ENCODE measurements at regions of chr10 and their contacts with region 1.

Region 1: DNA sequence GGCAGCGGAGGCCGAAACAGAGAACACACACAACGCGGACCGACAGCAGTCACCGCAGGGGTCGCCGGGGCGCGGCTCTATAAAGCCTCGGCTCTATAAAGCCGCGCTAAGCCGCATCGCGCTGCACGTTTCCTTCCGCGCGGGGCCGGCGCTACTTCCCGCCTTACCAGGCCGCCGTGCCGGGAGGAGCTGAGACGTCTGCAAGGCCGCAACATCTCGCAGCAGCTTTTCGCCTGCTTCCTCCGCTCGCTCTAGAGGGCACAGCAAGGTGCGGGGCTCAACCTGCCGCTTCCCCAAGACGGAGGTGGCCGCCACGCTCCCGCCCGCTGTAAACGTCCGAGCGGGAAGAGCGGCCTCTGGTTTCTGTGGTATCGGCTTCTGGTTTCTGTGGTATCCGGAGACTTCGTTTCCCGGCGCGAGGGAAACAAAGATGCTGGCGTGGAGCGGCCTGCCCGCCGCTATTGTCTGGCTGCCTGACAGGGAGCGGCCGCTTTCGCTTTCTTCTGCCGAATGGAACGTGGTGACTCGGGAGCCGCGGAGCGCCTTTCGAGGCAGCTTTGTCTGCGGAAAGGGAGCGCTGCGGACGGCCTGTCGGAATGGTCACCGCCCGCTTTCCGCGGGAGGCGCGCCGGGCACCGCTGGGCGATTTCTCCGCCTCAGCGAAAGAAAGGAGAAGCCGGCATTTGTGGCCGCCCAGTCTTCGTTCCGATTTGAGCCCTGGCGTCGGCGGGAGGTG is 91.8 kb downstream of the SPAG6 start:
- DNase-seq: peak; percentile 97
- H3K4me3 ChIP-seq: peak overlapping the region; percentile 67 to 86 (median 80)
- H3K27ac ChIP-seq: peak overlapping the region; percentile 93 to 98 (median 96)
- H3K4me1 ChIP-seq: peaks cover 18 to 27% (median 25%) of the 10 kb centered on the region in 4 donors
- H3K27me3 ChIP-seq: no peaks in the 10 kb centered on the region
- CTCF ChIP-seq: peak in 2 of 3 experiments; percentile 3 to 4
- EP300 ChIP-seq: no peak
- POLR2A ChIP-seq: peak; percentile 26

Region 2: DNA sequence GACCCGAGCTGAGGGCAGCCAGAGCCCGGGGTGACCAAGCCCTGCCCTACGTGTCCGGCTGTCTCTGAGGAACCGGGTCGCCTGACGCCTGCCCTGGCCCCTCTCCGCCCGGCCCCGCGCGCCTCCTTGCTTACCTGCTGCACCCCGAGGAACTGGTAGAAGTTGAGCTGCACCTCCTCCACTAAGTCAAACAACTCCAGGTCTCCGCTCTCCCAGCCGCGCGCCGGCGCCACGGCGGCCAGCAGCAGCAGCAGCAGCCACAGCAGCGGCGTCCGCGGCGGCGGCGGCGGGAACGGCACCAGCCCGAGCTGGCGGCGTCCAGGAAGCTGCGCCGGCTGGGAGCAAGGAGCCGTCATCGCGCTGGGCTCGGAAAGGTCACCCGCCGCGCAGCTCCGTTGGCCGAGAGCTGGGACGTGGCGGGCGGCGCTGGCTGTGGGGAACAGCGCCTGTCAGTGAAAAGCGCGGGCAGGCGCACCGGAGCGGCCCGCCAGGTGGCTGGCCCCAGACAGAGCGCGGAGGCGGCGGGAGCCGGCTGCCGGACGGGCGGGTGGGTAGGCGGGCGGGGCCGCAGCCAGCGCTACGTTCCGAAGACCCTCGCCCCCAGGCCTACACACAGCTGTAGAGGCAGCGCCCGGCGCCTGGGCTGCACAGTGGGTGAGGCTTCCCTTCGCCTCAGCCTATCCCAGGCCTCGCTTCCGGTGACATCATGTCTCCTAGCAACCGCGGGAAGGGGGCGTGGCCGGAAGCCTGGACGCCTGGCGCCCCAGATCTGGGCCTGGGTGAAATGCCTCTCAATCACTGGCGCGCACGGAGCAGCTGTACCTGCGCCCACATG is 433.8 kb before region 1 on chr10 and contains the start of gene DNAJC1:
- intact Hi-C with region 1: loop called (anchors 5 kb)
- DNase-seq: peak; percentile 99
- H3K4me3 ChIP-seq: peak within 1 kb of the TSS; percentile 71 to 93 (median 80)
- H3K27ac ChIP-seq: peak within 1 kb of the TSS; percentile 93 to 99 (median 94)
- H3K4me1 ChIP-seq: peaks cover 0 to 33% (median 26%) of the 10 kb centered on the region in 4 donors
- H3K27me3 ChIP-seq: no peaks in the 10 kb centered on the region
- CTCF ChIP-seq: peak in 1 of 3 experiments; percentile 28
- EP300 ChIP-seq: no peak
- POLR2A ChIP-seq: peak; percentile 83
- total RNA-seq, gene DNAJC1: 46.5 to 70.6 (median 61.5) TPM

Region 3: DNA sequence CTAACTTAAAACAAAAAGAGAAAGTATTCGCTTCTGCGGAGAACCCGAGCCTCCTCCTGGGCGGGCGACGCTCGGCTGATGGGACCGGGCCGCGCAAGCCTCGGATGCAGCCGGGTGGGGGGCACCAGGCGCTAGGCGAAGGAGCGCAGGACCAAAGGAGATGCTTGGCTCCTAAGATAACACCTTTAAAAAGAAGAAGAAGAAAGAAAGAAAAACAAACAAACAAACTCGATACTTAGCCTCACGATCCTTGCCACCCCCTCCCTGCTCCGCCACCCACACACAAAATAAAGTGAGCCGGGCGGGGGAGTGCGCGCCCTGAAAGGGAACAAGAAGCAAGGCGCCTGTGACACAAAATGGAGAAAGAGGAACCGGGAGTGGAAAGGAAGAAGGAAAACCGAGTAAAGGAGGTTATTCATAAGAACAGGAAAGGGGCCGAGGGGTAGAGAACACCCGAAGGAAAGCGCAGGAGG is 185.3 kb before region 1 on chr10:
- intact Hi-C with region 1: loop called (anchors 10 kb)
- DNase-seq: peak; percentile 94
- H3K4me3 ChIP-seq: peak overlapping the region; percentile 80 to 87 (median 84)
- H3K27ac ChIP-seq: peak overlapping the region; percentile 90 to 97 (median 96)
- H3K4me1 ChIP-seq: peaks cover 0 to 19% (median 10%) of the 10 kb centered on the region in 4 donors
- H3K27me3 ChIP-seq: no peaks in the 10 kb centered on the region
- CTCF ChIP-seq: no peak
- EP300 ChIP-seq: no peak
- POLR2A ChIP-seq: no peak

Region 4: DNA sequence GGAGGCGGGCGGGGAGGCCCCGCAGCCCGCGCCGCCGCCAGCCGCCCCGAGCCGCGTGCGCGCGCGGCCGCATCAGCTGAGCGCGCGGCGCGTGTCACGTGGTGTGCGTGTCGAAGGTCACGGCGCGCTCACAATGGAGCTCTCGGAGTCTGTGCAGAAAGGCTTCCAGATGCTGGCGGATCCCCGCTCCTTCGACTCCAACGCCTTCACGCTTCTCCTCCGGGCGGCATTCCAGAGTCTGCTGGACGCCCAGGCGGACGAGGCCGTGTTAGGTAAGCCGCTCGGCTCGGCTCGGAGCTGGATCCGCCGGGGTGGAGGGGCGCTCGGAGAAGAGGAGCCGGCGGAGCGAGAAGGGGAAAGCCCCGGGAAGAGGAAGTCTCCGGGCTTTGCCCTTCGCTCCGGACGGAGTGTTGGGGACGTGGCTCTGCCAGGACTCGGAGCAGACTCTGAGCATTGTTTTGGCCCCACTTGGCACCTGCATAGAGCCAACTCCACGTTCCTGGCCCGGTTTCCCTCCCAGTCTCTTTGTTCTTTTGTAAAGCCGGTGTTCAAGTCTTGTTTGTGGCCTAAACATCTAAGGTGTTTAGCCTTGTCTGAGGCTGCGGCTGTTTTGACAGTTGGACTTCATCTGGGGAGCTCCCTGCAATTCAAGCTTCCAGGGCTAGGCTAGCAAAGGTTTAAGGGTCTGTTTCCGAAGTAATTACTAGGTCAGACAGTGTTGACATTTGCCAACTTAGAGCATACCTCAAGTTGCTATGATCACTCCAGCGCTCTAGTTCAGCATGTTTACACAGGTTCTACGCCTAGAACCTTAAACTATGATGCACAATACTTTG is 120.5 kb before region 1 on chr10 and contains the start of gene COMMD3:
- intact Hi-C with region 1: loop called (anchors 5 kb)
- DNase-seq: peak; percentile 97
- H3K4me3 ChIP-seq: peak within 1 kb of the TSS; percentile 70 to 85 (median 82)
- H3K27ac ChIP-seq: peak within 1 kb of the TSS; percentile 85 to 95 (median 94)
- H3K4me1 ChIP-seq: peaks cover 28 to 45% (median 38%) of the 10 kb centered on the region in 4 donors
- H3K27me3 ChIP-seq: no peaks in the 10 kb centered on the region
- CTCF ChIP-seq: peak in 1 of 3 experiments; percentile 3
- EP300 ChIP-seq: no peak
- POLR2A ChIP-seq: peak; percentile 7
- total RNA-seq, gene COMMD3: 25.5 to 41.1 (median 31.5) TPM

Region 5: GRCh38 chr10:22340362-22341189 is 96.5 kb before region 1 on chr10:
- intact Hi-C with region 1: loop called (anchors 5 kb)
- DNase-seq: no peak
- H3K4me3 ChIP-seq: peak overlapping the region; percentile 81 to 93 (median 86)
- H3K27ac ChIP-seq: peak overlapping the region; percentile 96 to 98 (median 98)
- H3K4me1 ChIP-seq: peaks cover 33 to 44% (median 37%) of the 10 kb centered on the region in 4 donors
- H3K27me3 ChIP-seq: peaks cover 30 to 83% (median 79%) of the 10 kb centered on the region in 4 donors
- CTCF ChIP-seq: no peak
- EP300 ChIP-seq: no peak
- POLR2A ChIP-seq: peak; percentile 6

Region 6: GRCh38 chr10:22714479-22715289 is 277.6 kb after region 1 on chr10 and contains the start of gene PIP4K2A:
- intact Hi-C with region 1: loop called (anchors 10 kb)
- DNase-seq: no peak
- H3K4me3 ChIP-seq: peak within 1 kb of the TSS; percentile 75 to 99 (median 95)
- H3K27ac ChIP-seq: peak within 1 kb of the TSS; percentile 85 to 91 (median 88)
- H3K4me1 ChIP-seq: peaks cover 16 to 35% (median 33%) of the 10 kb centered on the region in 4 donors
- H3K27me3 ChIP-seq: no peaks in the 10 kb centered on the region
- CTCF ChIP-seq: no peak
- EP300 ChIP-seq: no peak
- POLR2A ChIP-seq: no peak
- total RNA-seq, gene PIP4K2A: 26.2 to 34.3 (median 32.5) TPM

Region 7: DNA sequence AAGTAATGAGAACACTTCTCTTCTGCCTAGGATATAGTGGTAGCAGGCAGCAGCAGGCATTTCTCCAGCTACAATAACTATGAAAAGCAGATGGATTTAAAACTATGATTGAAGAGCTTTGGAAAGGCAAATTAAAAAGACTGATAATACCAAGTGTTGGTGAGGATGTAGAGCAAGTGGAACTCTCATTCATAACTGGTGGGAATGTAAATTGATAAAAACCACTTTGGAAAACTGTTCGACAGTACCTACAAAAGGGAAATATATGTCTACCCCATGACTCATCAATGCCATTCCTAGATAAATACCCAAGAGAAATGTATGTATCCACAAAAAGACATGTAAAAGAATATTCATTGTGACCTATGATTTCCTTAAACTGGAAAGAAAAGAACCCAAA is 505.4 kb after region 1 on chr10:
- intact Hi-C with region 1: no loop called
- DNase-seq: no peak
- H3K4me3 ChIP-seq: no peak overlapping the region
- H3K27ac ChIP-seq: no peak overlapping the region
- H3K4me1 ChIP-seq: no peaks in the 10 kb centered on the region
- H3K27me3 ChIP-seq: no peaks in the 10 kb centered on the region
- CTCF ChIP-seq: no peak
- EP300 ChIP-seq: no peak
- POLR2A ChIP-seq: no peak

Region 8: GRCh38 chr10:22988581-22989360 is 551.7 kb after region 1 on chr10:
- intact Hi-C with region 1: loop called (anchors 10 kb)
- DNase-seq: no peak
- H3K4me3 ChIP-seq: no peak overlapping the region
- H3K27ac ChIP-seq: no peak overlapping the region
- H3K4me1 ChIP-seq: peaks cover 0 to 10% (median 8%) of the 10 kb centered on the region in 4 donors
- H3K27me3 ChIP-seq: no peaks in the 10 kb centered on the region
- CTCF ChIP-seq: peak; percentile 87 to 92 (median 90)
- EP300 ChIP-seq: no peak
- POLR2A ChIP-seq: no peak

Measured in esophagus muscularis mucosa (tissue), 4 donors.